Common myeloid progenitor, CD34-positive (primary cell): ENCODE measurements at regions of chr14 and their contacts with region 1.

Region 1: DNA sequence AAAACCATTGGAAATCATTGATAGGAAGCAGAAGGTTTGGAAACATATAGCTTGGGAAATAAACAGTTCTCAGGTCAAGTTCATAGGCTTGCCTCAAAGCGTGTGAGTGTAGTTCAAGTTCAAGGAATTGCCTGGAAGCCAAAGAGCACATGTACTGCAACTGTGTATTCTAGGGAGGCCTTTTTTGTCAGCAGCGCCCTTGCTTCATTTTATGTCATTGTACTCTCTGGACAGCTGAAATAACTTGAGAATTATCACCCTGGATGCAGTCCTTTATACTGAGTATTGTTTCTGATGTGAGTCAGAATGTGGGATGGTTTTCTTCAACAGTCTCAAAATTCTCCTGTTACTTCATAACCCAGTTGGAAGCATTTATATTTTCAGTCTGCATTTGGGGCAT is 16.0 kb upstream of the EVL start:
- DNase-seq: no peak
- H3K4me3 ChIP-seq: no peak overlapping the region
- H3K27ac ChIP-seq: no peak overlapping the region
- H3K4me1 ChIP-seq: peaks cover 0 to 3% (median 2%) of the 10 kb centered on the region in 4 experiments
- H3K27me3 ChIP-seq: no peaks in the 10 kb centered on the region

Region 2: DNA sequence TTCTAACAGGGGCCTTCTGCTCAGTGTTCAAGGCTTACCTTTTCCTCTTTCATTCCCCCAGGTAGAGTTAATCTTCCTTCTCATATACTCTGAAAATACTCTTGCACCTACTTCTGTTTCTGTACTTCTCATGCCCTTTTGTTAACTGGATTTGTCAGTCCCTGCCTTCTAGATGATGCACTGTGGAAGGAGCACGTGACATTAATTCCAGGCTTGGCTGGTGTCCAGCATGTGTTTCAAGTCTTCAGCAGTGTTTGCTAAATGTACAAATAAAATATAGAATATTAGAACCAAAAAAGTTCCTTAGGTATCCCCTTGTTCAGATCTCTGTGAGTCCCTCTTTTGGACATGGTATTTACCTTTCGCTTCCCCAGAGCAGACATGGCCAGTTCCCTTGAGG is 11.9 kb before region 1 on chr14:
- CTCF ChIA-PET with region 1: interaction called, 14 read pairs
- POLR2A ChIA-PET with region 1: interaction called, 3 read pairs
- DNase-seq: no peak
- H3K4me3 ChIP-seq: no peak overlapping the region
- H3K27ac ChIP-seq: no peak overlapping the region
- H3K4me1 ChIP-seq: peaks cover 0 to 33% (median 4%) of the 10 kb centered on the region in 4 experiments
- H3K27me3 ChIP-seq: no peaks in the 10 kb centered on the region